HAP-1 (cell line): ENCODE measurements at regions of chr3 and their contacts with region 1.

Region 1: GRCh38 chr3:53938645-53939044 is 47.0 kb upstream of the SELENOK start:
- DNase-seq: peak; percentile 63 to 70
- H3K4me3 ChIP-seq: no peak overlapping the region
- H3K4me1 ChIP-seq: no peaks in the 10 kb centered on the region
- H3K27me3 ChIP-seq: no peaks in the 10 kb centered on the region

Region 2: DNA sequence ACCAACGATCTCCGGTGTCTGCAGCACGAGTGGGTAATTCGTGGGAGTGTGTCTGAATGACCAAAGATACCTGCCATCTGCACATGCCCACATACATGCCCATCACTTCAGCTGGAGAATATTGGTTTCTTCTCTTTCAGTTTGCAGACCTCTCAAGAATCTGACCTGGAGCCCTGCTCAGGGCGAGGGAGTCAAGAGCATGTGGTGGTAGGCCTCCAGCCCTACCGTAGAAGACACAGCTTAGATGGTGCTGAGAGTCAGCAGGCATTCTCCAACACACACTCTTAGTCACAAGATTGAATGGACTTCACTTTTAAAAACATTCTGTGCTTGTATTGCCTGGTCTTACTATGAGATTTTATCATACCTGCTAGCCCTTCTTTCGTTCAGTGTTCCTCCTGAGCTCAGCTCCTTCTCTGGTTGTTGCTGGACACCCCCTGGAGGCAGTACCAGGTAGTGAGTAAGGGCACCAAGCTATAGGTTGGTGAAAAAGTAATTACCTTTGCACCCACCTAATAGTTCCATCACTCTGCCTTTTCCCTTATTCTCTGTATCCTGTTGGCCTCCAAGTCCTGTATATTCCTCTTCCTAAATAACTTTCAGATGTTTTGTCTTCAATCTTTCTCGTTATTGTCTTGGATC is 435.7 kb after region 1 on chr3:
- in situ Hi-C with region 1: loop called (anchors 25 kb)
- DNase-seq: peak; percentile 21 to 62
- H3K4me3 ChIP-seq: no peak overlapping the region
- H3K4me1 ChIP-seq: peaks cover 7% of the 10 kb centered on the region; the same call in 1 of the 2 replicates
- H3K27me3 ChIP-seq: peaks cover 2% of the 10 kb centered on the region; the same call in 1 of the 2 replicates

Region 3: DNA sequence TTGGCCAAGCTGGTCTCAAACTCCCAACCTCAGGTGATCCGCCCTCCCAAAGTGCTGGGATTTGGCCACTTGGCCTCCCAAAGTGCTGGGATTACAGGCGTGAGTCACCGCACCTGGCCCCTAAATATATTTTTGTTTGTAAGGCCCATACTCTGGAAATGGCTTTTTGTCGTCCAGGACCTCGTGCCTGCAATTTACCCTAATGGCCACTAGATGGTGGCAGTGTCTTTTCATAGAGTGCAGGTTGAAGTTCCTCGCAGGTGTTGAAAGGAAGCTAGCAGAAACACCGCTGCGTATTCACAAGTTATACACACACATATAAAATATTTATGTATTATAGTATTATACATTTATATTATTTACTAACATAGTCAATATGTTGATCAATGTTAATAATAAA is 892.0 kb after region 1 on chr3:
- in situ Hi-C with region 1: loop called (anchors 25 kb)
- DNase-seq: peak; percentile 40 to 42
- H3K4me3 ChIP-seq: no peak overlapping the region
- H3K4me1 ChIP-seq: no peaks in the 10 kb centered on the region
- H3K27me3 ChIP-seq: no peaks in the 10 kb centered on the region